ENCODE measurements at regions of chr3 and their contacts with region 1.

Region 1: DNA sequence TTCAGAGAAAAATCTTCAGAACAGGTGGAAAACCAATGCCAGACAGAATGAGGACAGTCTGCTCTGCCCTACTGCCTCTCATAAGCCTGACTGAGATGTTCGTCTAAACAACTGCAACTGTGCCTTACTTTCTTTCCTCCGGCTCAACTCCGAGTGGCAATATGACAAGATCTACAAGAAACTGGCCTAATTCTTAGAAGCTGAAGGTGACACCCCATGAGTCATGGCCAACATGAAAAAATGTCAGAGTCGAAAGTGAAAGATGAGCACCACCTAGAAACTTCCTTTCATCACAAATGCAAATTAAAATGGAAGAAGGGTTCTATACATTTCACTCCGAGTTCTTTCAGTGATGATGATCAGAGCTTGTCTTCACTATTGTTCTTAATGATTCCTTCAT is 12.9 kb downstream of the PCYT1A start:
- DNase-seq: peak; percentile 45 to 79
- H3K4me3 ChIP-seq: no peak overlapping the region
- H3K27ac ChIP-seq: peak overlapping the region; percentile 59
- H3K4me1 ChIP-seq: peaks cover 27% of the 10 kb centered on the region
- H3K27me3 ChIP-seq: no peaks in the 10 kb centered on the region
- CTCF ChIP-seq: no peak

Region 2: DNA sequence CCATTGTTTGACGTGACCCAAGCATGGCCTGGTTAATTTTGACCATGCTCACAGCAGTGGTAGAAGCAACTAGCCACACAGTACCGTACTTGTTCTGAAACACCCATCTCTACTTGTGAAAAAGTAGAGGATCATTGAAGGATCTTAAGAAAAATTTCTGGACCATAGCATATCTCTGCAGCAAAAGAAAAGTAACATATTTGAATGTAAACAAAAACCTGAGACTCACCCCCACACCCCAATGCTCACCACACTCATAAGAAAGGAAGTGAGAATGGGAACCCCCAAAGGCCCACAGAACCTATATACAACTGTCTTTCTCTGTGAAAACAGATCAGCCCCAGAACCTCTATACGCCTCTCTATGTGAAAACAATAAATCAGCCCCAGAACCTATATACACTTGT is 158.9 kb before region 1 on chr3:
- CTCF ChIA-PET with region 1: no interaction called
- POLR2A ChIA-PET with region 1: interaction called, 14 read pairs
- intact Hi-C with region 1: no loop called
- DNase-seq: no peak
- H3K4me3 ChIP-seq: no peak overlapping the region
- H3K27ac ChIP-seq: no peak overlapping the region
- H3K4me1 ChIP-seq: peaks cover 12% of the 10 kb centered on the region
- H3K27me3 ChIP-seq: no peaks in the 10 kb centered on the region
- CTCF ChIP-seq: no peak

Region 3: GRCh38 chr3:196298521-196298920 is 23.9 kb after region 1 on chr3:
- CTCF ChIA-PET with region 1: interaction called, 12 read pairs
- POLR2A ChIA-PET with region 1: interaction called, 6 read pairs
- intact Hi-C with region 1: no loop called
- DNase-seq: no peak
- H3K4me3 ChIP-seq: no peak overlapping the region
- H3K27ac ChIP-seq: no peak overlapping the region
- H3K4me1 ChIP-seq: no peaks in the 10 kb centered on the region
- H3K27me3 ChIP-seq: no peaks in the 10 kb centered on the region
- CTCF ChIP-seq: no peak

Region 4: DNA sequence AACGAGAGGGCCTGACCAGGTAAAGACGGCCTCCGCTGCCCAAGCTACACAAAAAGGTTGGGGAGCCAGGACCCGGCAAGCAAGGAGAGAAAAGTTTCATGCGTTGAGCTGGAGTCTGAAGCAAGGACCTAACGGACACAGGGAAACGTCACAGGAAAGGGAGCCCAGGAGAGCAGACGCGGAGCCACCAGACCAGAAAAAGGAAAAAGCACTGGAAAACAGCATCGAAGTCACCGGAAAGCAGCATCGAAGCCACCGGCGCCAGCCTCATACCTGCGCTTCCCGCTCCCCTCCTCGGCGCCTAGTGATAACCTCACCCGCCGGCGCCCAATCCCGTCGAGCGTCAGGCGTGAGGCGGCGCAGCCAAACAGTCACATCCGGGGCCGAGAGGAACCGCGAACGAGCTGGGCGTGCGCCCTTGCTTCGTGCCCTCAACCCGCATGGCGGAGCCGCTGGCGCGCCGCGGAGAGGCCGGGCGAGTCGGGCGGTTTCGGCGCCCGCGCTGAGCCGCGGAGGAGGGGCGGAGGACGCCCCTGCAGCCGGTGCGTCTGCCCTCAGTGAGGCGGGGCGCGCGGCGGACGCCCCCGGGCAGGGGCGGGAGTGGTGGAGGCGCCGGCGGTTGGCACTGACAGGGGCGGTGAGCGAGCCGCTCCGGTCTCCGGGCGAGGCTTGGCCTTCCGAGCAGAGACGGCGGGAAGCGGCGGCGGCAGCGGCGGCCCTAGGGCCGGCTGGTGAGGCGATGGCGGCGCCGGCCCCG is 293.8 kb after region 1 on chr3 and contains the starts of genes FBXO45 and WDR53:
- CTCF ChIA-PET with region 1: no interaction called
- POLR2A ChIA-PET with region 1: interaction called, 10 read pairs
- intact Hi-C with region 1: no loop called
- DNase-seq: peak; percentile 90 to 98
- H3K4me3 ChIP-seq: peak within 1 kb of the TSS; percentile 75
- H3K27ac ChIP-seq: peak within 1 kb of the TSS; percentile 30
- H3K4me1 ChIP-seq: peaks cover 34% of the 10 kb centered on the region
- H3K27me3 ChIP-seq: no peaks in the 10 kb centered on the region
- CTCF ChIP-seq: no peak
- total RNA-seq, gene FBXO45: 16.5 and 21.3 TPM in 2 replicates
- total RNA-seq, gene WDR53: 33.5 and 34.8 TPM in 2 replicates

Measured in PC-9 (cell line).